ENCODE measurements at regions of chr16 and their contacts with region 1.

Region 1: GRCh38 chr16:50152807-50153452 is at the start of gene TENT4B:
- DNase-seq: peak; percentile 87 to 97 (median 96)
- ATAC-seq: peak; percentile 88
- H3K4me3 ChIP-seq: peak within 1 kb of the TSS; percentile 87
- H3K4me3 Mint-ChIP-seq: peak within 1 kb of the TSS; percentile 87 to 99 (median 94)
- H3K27ac ChIP-seq: peak within 1 kb of the TSS; percentile 99
- H3K27ac Mint-ChIP-seq: peak within 1 kb of the TSS; percentile 93 to 99 (median 97)
- H3K4me1 ChIP-seq: peaks cover 16 to 30% of the 10 kb centered on the region in 2 donors
- H3K4me1 Mint-ChIP-seq: peaks cover 28 to 44% (median 40%) of the 10 kb centered on the region in 7 donors
- H3K27me3 ChIP-seq: no peaks in the 10 kb centered on the region
- H3K27me3 Mint-ChIP-seq: no peaks in the 10 kb centered on the region
- total RNA-seq, gene TENT4B: 18.8 to 25.9 (median 23.8) TPM

Region 2: GRCh38 chr16:50065624-50066481 is 87.1 kb before region 1 on chr16 and contains the start of gene HEATR3:
- CTCF ChIA-PET with region 1: interaction called, 4 read pairs
- POLR2A ChIA-PET with region 1: interaction called, 9 read pairs
- intact Hi-C with region 1: loop called (anchors 1 kb)
- DNase-seq: peak; percentile 86 to 96 (median 90)
- ATAC-seq: peak; percentile 93
- H3K4me3 ChIP-seq: peak within 1 kb of the TSS; percentile 91
- H3K4me3 Mint-ChIP-seq: peak within 1 kb of the TSS; percentile 80 to 97 (median 92)
- H3K27ac ChIP-seq: peak within 1 kb of the TSS; percentile 81
- H3K27ac Mint-ChIP-seq: peak within 1 kb of the TSS; percentile 55 to 96 (median 93)
- H3K4me1 ChIP-seq: peaks cover 17 to 18% of the 10 kb centered on the region in 2 donors
- H3K4me1 Mint-ChIP-seq: peaks cover 34 to 49% (median 44%) of the 10 kb centered on the region in 7 donors
- H3K27me3 ChIP-seq: no peaks in the 10 kb centered on the region
- H3K27me3 Mint-ChIP-seq: no peaks in the 10 kb centered on the region
- total RNA-seq, gene HEATR3: 12.5 to 27.5 (median 23.5) TPM

Region 3: DNA sequence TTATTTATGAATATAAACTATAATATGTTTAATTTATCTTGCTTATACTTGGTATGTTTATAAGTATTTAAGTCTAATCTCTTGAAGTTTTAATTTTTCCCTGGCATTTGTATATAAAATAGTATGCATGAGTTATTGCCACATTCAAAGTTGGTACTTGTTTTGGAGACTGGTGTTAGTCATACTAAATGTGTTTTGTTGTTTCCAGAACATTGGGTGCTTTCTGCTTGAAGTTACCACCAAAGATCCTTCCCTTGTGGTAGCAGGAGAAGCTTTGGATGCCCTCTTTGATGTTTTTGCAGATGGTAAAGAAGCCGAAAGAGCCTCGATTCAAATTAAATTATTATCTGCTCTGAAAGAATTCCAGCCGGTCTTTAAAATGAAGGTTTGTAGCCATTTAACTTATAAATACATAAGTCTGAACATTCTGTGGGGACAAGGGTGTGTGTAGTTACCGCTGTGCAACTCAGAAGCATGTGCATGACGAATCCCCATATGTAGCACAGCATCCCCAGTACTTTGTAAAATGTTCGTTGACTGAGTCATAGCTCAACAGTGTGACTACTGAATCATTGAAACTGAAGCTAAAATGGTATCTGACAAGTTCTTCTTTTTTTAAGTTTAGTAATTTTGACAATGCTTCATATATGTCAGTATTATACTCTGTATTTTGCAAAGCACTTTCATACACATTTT is 50.7 kb before region 1 on chr16:
- CTCF ChIA-PET with region 1: interaction called, 3 read pairs
- POLR2A ChIA-PET with region 1: interaction called, 3 read pairs
- intact Hi-C with region 1: loop called in 1 of 2 experiments (anchors 10 kb)
- DNase-seq: no peak
- ATAC-seq: no peak
- H3K4me3 ChIP-seq: no peak overlapping the region
- H3K4me3 Mint-ChIP-seq: no peak overlapping the region
- H3K27ac ChIP-seq: no peak overlapping the region
- H3K27ac Mint-ChIP-seq: peak overlapping the region in 1 of 9 donors; percentile 70
- H3K4me1 ChIP-seq: no peaks in the 10 kb centered on the region
- H3K4me1 Mint-ChIP-seq: peaks cover 0 to 15% (median 0%) of the 10 kb centered on the region in 7 donors
- H3K27me3 ChIP-seq: no peaks in the 10 kb centered on the region
- H3K27me3 Mint-ChIP-seq: no peaks in the 10 kb centered on the region

Region 4: DNA sequence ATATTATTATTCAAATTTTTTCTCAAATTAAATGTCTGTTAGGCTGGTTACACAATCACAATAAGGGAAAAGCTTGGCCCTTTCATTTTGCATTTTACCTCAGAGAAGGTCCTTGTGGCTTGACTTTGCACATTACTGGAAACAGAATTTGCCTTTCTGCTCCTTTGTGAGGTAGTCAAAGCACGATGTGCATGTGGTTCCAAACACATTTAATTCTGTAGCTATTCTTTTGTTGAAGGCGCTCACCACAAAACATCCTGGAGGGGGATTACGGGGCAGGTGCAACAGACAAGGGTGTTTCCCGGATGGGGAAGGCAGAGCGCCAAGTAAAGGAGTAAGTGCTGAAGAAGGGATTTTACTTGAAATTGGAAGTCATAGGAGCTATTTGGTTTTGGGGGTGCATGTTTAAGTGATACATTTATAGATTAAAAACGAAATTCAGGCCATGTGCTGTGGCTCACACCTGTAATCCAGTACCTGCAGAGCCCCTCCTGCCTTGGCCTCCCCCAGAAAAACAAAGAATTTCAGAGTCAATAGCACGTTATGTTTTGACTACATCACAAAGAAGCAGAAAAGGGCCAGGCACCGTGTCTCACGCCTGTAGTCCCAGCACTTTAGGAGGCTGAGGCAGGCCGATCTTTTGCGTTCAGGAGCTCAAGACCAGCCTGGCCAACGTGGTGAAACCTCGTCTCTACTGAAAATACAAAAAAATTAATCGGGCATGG is 31.0 kb before region 1 on chr16:
- CTCF ChIA-PET with region 1: interaction called, 3 read pairs
- POLR2A ChIA-PET with region 1: no interaction called
- intact Hi-C with region 1: loop called (anchors 1 kb)
- DNase-seq: peak in 8 of 9 donors; percentile 46 to 77 (median 58)
- ATAC-seq: peak; percentile 80
- H3K4me3 ChIP-seq: no peak overlapping the region
- H3K4me3 Mint-ChIP-seq: peak overlapping the region in 8 of 10 donors; percentile 6 to 71 (median 40)
- H3K27ac ChIP-seq: peak overlapping the region; percentile 29
- H3K27ac Mint-ChIP-seq: peak overlapping the region; percentile 56 to 93 (median 75)
- H3K4me1 ChIP-seq: peaks cover 0 to 13% of the 10 kb centered on the region in 2 donors
- H3K4me1 Mint-ChIP-seq: peaks cover 7 to 45% (median 19%) of the 10 kb centered on the region in 7 donors
- H3K27me3 ChIP-seq: no peaks in the 10 kb centered on the region
- H3K27me3 Mint-ChIP-seq: no peaks in the 10 kb centered on the region

Region 5: GRCh38 chr16:50195276-50195675 is 42.3 kb after region 1 on chr16:
- CTCF ChIA-PET with region 1: no interaction called
- POLR2A ChIA-PET with region 1: interaction called, 3 read pairs
- intact Hi-C with region 1: loop called (anchors 1 to 2 kb)
- DNase-seq: no peak
- ATAC-seq: no peak
- H3K4me3 ChIP-seq: no peak overlapping the region
- H3K4me3 Mint-ChIP-seq: peak overlapping the region in 8 of 10 donors; percentile 4 to 71 (median 45)
- H3K27ac ChIP-seq: peak overlapping the region; percentile 3
- H3K27ac Mint-ChIP-seq: peak overlapping the region; percentile 11 to 87 (median 56)
- H3K4me1 ChIP-seq: peaks cover 18 to 25% of the 10 kb centered on the region in 2 donors
- H3K4me1 Mint-ChIP-seq: peaks cover 46 to 86% (median 75%) of the 10 kb centered on the region in 7 donors
- H3K27me3 ChIP-seq: no peaks in the 10 kb centered on the region
- H3K27me3 Mint-ChIP-seq: no peaks in the 10 kb centered on the region

Region 6: DNA sequence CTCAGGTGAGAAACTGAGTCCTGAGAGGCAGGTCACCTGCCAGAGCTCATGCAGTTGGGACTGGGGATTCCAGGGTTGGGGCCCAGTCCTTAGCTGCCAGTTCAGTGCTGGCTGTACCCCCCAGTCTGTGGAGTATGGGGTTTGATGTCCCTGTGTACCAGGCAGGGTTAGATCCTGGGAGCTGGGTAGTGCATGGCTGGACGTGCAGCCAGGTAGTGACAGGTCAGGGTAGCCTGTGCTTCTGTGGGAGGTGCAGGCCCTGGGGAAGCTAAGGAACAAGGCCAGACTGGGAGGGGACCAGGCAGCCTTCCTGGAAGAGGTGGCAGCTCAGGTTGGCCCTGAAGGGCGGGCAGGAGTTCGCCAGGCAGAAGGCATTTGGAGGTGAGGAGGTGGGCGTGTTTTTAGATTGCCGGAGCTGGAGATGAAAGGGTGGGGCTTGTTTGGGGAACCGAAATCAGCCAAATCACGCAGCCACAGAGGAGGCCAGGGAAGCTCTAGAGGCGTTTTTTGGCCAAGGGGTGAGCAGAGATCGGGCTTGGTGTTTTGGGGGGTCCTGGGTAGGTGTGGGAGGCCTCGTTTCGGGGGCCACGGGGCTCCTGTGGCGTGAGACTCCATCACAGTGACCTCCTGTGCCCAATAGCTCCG is 120.9 kb after region 1 on chr16:
- CTCF ChIA-PET with region 1: interaction called, 5 read pairs
- POLR2A ChIA-PET with region 1: interaction called, 7 read pairs
- intact Hi-C with region 1: loop called in 1 of 2 experiments (anchors 2 kb)
- DNase-seq: peak in 5 of 9 donors; percentile 26 to 52 (median 40)
- ATAC-seq: peak; percentile 65
- H3K4me3 ChIP-seq: peak overlapping the region; percentile 67
- H3K4me3 Mint-ChIP-seq: peak overlapping the region; percentile 83 to 98 (median 92)
- H3K27ac ChIP-seq: peak overlapping the region; percentile 88
- H3K27ac Mint-ChIP-seq: peak overlapping the region; percentile 95 to 99 (median 99)
- H3K4me1 ChIP-seq: peaks cover 93% of the 10 kb centered on the region in 2 donors
- H3K4me1 Mint-ChIP-seq: peaks cover 72 to 99% (median 93%) of the 10 kb centered on the region in 7 donors
- H3K27me3 ChIP-seq: no peaks in the 10 kb centered on the region
- H3K27me3 Mint-ChIP-seq: no peaks in the 10 kb centered on the region

Region 7: GRCh38 chr16:50741808-50742575 is 589.1 kb after region 1 on chr16 and contains the start of gene CYLD:
- CTCF ChIA-PET with region 1: no interaction called
- POLR2A ChIA-PET with region 1: interaction called, 4 read pairs
- intact Hi-C with region 1: loop called (anchors 1 to 2 kb)
- DNase-seq: peak; percentile 95 to 100 (median 100)
- ATAC-seq: peak; percentile 94
- H3K4me3 ChIP-seq: peak within 1 kb of the TSS; percentile 70
- H3K4me3 Mint-ChIP-seq: peak within 1 kb of the TSS; percentile 90 to 100 (median 96)
- H3K27ac ChIP-seq: peak within 1 kb of the TSS; percentile 100
- H3K27ac Mint-ChIP-seq: peak within 1 kb of the TSS; percentile 94 to 99 (median 98)
- H3K4me1 ChIP-seq: peaks cover 7 to 38% of the 10 kb centered on the region in 2 donors
- H3K4me1 Mint-ChIP-seq: peaks cover 28 to 52% (median 40%) of the 10 kb centered on the region in 7 donors
- H3K27me3 ChIP-seq: no peaks in the 10 kb centered on the region
- H3K27me3 Mint-ChIP-seq: no peaks in the 10 kb centered on the region
- total RNA-seq, gene CYLD: 259 to 393 (median 336) TPM